Activated T-helper 2 cell treated with anti-CD3 and anti-CD28 coated beads, Interferon-gamma antibody, Interleukin-2, Interleukin-4, amounts not matched to agents 10 μg/mL and 5 μg/mL and 100 μg/mL, durations not matched to agents 14 hours and 24 hours and 36 hours (primary cell): ENCODE measurements at regions of chr7 and their contacts with region 1.

Region 1: GRCh38 chr7:21427182-21427870 is 557 bp upstream of the SP4 start:
- DNase-seq: peak; percentile 99
- H3K4me3 Mint-ChIP-seq: peak overlapping the region; percentile 100
- H3K27ac Mint-ChIP-seq: peak overlapping the region; percentile 100
- H3K4me1 Mint-ChIP-seq: peaks cover 40% of the 10 kb centered on the region
- H3K27me3 Mint-ChIP-seq: no peaks in the 10 kb centered on the region

Region 2: GRCh38 chr7:21261627-21262594 is 165.4 kb before region 1 on chr7:
- intact Hi-C with region 1: loop called (anchors 5 kb)
- DNase-seq: peak; percentile 28
- H3K4me3 Mint-ChIP-seq: no peak overlapping the region
- H3K27ac Mint-ChIP-seq: no peak overlapping the region
- H3K4me1 Mint-ChIP-seq: peaks cover 10% of the 10 kb centered on the region
- H3K27me3 Mint-ChIP-seq: peaks cover 12% of the 10 kb centered on the region

Region 3: DNA sequence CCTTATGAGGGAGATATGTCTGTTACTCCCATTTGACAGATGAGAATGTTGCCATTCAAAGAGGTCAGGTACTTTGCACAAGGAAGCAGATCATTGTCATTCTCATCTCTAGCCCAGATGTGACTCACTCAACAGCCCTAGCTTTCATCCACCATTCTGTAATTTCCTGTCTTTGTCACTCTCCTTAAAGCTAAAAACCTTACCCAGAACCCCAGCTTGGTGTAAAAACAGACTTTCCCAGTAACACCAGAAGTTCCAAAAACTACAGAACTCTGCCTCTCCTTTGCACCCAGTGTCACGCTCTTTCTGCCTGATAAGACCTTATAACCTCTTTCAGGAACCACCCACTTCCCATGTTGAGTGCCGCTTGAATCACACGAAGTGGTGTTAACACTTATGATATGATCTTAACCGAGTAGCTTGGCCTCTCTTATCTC is 88.6 kb before region 1 on chr7:
- intact Hi-C with region 1: loop called (anchors 1 kb)
- DNase-seq: peak; percentile 73
- H3K4me3 Mint-ChIP-seq: peak overlapping the region; percentile 23
- H3K27ac Mint-ChIP-seq: peak overlapping the region; percentile 87
- H3K4me1 Mint-ChIP-seq: peaks cover 55% of the 10 kb centered on the region
- H3K27me3 Mint-ChIP-seq: no peaks in the 10 kb centered on the region

Region 4: DNA sequence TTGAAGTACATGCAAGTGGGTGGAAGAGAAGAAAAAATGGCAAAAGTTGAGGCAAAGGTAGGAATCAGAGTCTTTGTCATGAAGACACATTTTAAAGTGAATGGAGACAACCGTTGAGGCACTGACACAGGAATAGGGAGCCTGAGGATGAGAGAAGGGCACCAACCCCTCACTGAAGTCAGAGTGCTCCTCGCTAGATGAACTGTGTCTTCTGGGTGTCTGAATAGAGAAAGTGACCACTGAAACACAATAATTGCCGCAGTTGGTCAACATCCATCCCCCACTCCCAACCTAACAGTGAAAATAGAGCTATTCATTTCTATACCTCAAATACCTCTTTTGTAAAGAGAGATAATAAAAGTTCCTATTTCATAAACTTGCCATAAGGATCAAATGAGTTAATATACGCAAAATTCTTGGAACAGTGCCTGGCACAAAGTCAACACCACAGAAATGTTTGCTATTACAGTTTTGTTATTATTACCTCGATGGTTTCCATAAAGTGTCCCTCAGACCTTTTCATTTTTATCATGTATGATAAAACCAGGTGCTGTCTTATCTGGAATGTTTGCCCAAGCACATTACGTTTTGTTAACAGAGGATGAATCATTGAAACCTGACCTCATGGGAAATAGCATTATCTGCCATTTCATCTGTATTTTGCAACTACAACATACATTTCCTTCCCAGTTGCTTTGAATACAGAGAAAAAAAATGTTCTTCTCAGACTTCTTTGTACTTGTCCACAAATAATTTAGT is 61.3 kb before region 1 on chr7:
- intact Hi-C with region 1: loop called (anchors 2 kb)
- DNase-seq: no peak
- H3K4me3 Mint-ChIP-seq: no peak overlapping the region
- H3K27ac Mint-ChIP-seq: peak overlapping the region; percentile 25
- H3K4me1 Mint-ChIP-seq: peaks cover 56% of the 10 kb centered on the region
- H3K27me3 Mint-ChIP-seq: no peaks in the 10 kb centered on the region

Region 5: DNA sequence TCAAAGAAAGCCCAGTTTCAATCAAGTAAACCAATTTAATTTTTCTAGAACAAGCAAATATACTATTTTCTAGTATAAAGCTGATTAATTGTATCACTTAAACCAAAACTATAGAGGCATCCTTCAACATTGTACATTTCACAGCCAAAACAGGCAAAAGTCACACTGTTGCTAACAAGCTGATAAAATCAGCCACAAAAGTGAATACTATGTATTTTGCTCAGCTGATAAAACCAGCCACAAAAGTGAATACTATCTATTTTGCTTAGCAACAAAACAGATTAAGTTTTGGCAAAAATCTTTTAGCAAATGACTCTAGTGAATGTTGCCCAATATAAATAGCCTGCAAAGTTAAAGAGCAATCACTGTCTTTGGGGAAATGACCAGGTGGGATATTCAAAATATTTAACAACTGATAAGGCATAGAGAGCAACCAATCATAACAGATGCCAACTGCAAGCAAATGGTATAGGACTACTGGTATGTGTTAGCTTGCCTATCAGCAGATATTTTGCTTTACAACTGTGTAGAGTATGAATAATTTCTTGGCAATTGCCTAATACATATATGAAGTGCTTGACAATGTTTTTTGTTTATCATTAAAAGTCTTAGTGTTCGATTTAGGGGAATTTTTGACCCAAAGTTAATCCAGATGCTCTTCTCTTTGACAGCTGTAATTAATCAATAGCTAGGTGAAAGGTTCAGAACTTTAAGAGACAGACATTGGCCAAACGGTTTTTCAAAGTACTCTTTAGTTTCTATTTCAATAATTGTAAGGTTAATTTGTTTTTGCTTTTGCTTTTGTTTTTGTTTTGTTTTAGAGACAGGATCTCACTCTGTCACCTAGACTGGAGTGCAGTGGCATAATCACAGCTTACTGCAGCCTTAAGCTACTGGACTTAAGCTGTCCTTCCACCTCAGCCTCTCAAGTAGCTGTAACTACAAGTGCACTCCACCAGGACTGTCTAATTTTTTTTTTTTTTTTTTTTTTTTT is 43.8 kb before region 1 on chr7:
- intact Hi-C with region 1: loop called (anchors 5 kb)
- DNase-seq: no peak
- H3K4me3 Mint-ChIP-seq: peak overlapping the region; percentile 51
- H3K27ac Mint-ChIP-seq: peak overlapping the region; percentile 64
- H3K4me1 Mint-ChIP-seq: peaks cover 35% of the 10 kb centered on the region
- H3K27me3 Mint-ChIP-seq: peaks cover 2% of the 10 kb centered on the region

Region 6: DNA sequence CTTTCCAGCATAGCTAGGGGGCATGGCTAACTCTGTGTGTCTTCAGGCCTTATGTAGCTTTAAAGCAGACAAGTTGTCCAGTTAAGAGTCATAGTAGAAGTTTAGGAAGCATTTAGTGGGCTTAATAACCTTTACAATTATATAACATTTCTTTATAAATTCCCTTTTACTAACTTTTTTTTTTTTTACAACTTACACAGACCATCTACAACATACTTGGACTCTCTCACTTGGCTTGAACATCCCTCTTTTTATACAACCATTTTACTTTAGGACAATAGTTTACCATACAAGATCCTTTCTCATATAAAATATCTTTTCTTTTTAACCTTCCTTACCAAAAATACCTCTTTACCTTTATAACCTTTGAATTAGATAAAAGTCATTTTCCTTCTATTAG is 26.9 kb after region 1 on chr7:
- intact Hi-C with region 1: no loop called
- DNase-seq: no peak
- H3K4me3 Mint-ChIP-seq: no peak overlapping the region
- H3K27ac Mint-ChIP-seq: no peak overlapping the region
- H3K4me1 Mint-ChIP-seq: peaks cover 11% of the 10 kb centered on the region
- H3K27me3 Mint-ChIP-seq: no peaks in the 10 kb centered on the region

Region 7: GRCh38 chr7:21945454-21946227 is 518.3 kb after region 1 on chr7 and contains the start of gene CDCA7L:
- intact Hi-C with region 1: loop called (anchors 5 kb)
- DNase-seq: peak; percentile 67
- H3K4me3 Mint-ChIP-seq: peak within 1 kb of the TSS; percentile 91
- H3K27ac Mint-ChIP-seq: peak within 1 kb of the TSS; percentile 85
- H3K4me1 Mint-ChIP-seq: peaks cover 62% of the 10 kb centered on the region
- H3K27me3 Mint-ChIP-seq: peaks cover 6% of the 10 kb centered on the region
- total RNA-seq, gene CDCA7L: 81.5 and 82.9 TPM in 2 replicates